AG04449 (cell line): ENCODE measurements at regions of chr4 and their contacts with region 1.

Region 1: DNA sequence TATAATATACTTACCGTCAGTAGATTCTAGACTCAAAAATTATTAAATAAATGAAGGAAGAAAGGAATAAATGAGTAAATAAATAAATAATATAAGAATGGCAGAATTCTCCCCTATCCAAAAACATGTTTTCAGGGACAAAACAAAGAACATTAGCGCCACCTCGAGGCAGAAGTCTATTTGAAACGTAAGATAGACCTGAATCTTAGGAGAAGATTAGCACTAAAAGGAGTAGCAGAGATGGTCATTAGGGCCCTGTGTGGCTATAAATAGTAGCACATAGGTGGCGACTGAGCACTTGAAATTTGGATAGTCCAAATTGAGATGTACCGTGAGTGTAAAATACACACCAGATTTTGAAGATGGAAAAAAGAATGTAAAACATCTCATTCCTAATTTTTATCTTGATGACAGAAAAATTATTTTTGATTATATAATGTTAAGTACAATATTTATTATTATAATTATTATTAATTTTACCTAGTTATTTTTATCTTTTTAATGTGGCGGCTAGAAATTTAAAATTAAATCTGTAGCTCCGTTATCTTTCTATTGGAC is 24.3 kb upstream of the SRD5A3 start:
- DNase-seq: no peak
- H3K4me3 ChIP-seq: no peak overlapping the region
- CTCF ChIP-seq: peak; percentile 48

Region 2: DNA sequence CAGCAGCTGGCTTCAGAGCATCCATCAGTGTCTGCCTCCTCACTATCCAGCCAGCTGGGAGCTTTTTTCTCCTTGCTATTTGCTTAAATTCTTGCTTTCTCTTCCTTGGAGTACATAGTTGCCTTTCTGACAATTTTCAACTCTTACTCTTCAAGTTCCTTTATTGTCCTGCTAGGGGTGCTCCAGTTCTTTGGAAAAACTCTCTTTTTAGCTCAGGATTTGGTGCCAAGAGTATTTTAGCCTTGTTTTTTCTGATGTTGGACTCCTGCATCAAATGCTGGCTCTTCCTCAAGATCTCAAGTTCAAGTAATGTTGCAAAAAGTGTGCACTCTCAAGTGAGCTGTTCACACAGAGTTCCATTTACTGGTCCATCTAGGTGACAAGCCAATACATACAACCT is 322.8 kb before region 1 on chr4:
- CTCF ChIA-PET with region 1: interaction called, 16 read pairs
- POLR2A ChIA-PET with region 1: no interaction called
- DNase-seq: peak; percentile 4
- H3K4me3 ChIP-seq: no peak overlapping the region
- CTCF ChIP-seq: no peak

Region 3: GRCh38 chr4:55336136-55337034 is 14.6 kb after region 1 on chr4:
- CTCF ChIA-PET with region 1: interaction called, 21 read pairs
- POLR2A ChIA-PET with region 1: no interaction called
- DNase-seq: no peak
- H3K4me3 ChIP-seq: no peak overlapping the region
- CTCF ChIP-seq: no peak

Region 4: DNA sequence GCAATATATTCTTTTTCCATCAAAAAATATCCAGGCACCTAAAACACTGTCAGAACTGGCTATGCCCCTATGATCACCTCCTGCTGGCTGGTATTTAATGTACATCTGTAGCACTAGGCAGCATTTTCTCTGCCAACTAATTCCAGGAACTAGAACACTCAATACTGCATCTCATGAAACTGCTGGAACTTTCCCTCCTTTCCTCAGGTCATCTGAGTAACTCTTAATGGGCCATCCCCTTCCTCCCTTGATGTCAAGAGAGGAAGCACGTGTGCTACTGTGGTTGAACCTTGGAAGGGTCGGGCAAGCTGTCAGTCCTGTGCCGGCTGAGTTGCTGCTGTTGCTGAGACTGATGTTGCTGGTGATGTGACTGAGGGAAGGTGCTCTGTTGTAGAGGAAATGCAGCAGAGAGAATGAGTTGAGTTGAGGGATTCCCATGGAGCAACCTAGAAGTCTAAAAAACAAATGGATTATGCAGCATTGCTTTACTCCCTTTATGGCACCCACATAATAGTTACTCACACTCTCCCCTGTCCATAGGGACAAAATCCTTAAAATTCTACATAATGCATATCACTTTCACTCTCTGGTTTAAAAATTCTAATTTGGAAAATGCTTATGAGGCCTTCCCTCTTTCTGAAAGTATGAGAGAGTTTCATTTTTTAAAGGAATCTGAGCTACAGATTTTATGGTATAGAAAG is 113.5 kb after region 1 on chr4:
- CTCF ChIA-PET with region 1: no interaction called
- POLR2A ChIA-PET with region 1: no interaction called
- DNase-seq: no peak
- H3K4me3 ChIP-seq: no peak overlapping the region
- CTCF ChIP-seq: peak; percentile 42

Region 5: GRCh38 chr4:55578341-55579010 is 256.7 kb after region 1 on chr4:
- CTCF ChIA-PET with region 1: no interaction called
- POLR2A ChIA-PET with region 1: no interaction called
- DNase-seq: no peak
- H3K4me3 ChIP-seq: no peak overlapping the region
- CTCF ChIP-seq: no peak